ENCODE measurements at regions of chr9 and their contacts with region 1.

Region 1: GRCh38 chr9:36407122-36407723 is 7.2 kb upstream of the RNF38 start:
- ATAC-seq: peak; percentile 76 to 92 (median 86)
- H3K4me3 ChIP-seq: no peak overlapping the region
- H3K27ac ChIP-seq: no peak overlapping the region
- H3K4me1 ChIP-seq: peaks cover 0 to 3% of the 10 kb centered on the region in 2 donors

Region 2: GRCh38 chr9:36445800-36446361 is 38.7 kb after region 1 on chr9:
- in situ Hi-C with region 1: loop called in 1 of 9 experiments (anchors 5 kb)
- ATAC-seq: peak in 1 of 8 experiments; percentile 11
- H3K4me3 ChIP-seq: no peak overlapping the region
- H3K27ac ChIP-seq: no peak overlapping the region
- H3K4me1 ChIP-seq: peaks cover 2 to 5% of the 10 kb centered on the region in 2 donors

Region 3: DNA sequence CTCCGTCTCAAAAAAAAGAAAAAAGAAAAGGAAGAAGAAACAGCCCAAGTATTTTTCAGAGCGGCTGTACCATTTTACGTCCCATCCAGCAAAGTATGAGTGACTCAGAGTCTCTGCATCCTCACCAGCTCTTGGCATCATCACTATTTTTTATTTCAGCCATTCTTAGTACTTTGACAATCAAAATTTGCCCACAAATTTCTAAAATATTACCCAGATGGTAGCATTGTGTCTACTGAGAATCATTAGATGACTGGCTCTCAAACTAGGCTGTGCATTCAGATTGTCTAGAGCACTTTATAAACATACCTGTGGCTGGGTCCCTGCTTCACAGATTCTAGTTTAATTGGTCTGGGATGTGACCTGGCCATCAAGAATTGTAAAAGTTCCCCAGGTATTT is 143.9 kb after region 1 on chr9:
- in situ Hi-C with region 1: loop called in 7 of 9 experiments (anchors 5 to 25 kb)
- ATAC-seq: no peak
- H3K4me3 ChIP-seq: no peak overlapping the region
- H3K27ac ChIP-seq: no peak overlapping the region
- H3K4me1 ChIP-seq: no peaks in the 10 kb centered on the region

Region 4: GRCh38 chr9:36935768-36936497 is 528.7 kb after region 1 on chr9:
- in situ Hi-C with region 1: no loop called
- ATAC-seq: no peak
- H3K4me3 ChIP-seq: no peak overlapping the region
- H3K27ac ChIP-seq: no peak overlapping the region
- H3K4me1 ChIP-seq: peaks cover 5 to 30% of the 10 kb centered on the region in 2 donors

Measured in motor neuron (in vitro differentiated cells).